Calu3 (cell line): ENCODE measurements at regions of chr3 and their contacts with region 1.

Region 1: DNA sequence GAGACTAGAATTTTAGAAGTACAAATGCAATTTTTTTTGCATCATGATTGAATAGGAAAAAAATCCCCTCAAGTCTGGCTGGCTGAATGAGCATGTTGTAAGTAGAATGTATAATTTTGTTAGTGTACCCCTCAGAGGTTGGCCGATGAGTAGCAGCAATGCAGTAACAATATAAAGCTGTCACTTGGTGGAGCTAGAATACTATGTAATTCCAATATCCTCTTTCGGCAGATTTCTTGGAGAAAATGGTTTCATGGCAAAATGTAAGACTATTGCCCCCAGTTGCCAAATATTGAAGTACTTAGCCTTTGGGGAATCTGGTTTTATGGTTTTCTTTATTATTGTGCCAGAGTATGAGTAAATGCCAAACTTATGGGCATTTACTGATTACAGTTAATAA is 39.8 kb upstream of the SGO1 start:
- DNase-seq: peak; percentile 7
- H3K4me3 Mint-ChIP-seq: no peak overlapping the region
- H3K27ac Mint-ChIP-seq: no peak overlapping the region
- H3K4me1 Mint-ChIP-seq: no peaks in the 10 kb centered on the region
- H3K27me3 Mint-ChIP-seq: no peaks in the 10 kb centered on the region
- CTCF ChIP-seq: no peak

Region 2: DNA sequence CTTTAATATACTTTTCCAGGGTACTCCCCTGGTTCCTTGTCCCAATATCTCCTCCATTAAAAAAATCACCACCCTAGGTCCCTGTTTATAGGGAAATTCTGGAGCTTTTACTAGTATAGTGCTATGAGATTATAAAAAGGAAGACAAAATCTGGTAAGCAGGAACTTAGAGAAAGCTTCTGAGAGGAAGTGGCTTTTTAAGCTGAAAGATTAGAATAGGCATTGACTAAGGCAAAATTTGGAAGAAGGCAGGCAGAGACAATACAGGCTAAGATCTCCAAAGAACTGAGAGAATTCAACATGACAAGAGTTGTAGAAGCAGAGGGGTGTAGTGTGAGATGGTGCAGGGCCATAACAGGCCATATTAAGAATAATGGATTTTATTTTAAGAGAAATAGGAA is 65.5 kb before region 1 on chr3:
- CTCF ChIA-PET with region 1: no interaction called
- intact Hi-C with region 1: no loop called
- DNase-seq: no peak
- H3K4me3 Mint-ChIP-seq: no peak overlapping the region
- H3K27ac Mint-ChIP-seq: no peak overlapping the region
- H3K4me1 Mint-ChIP-seq: no peaks in the 10 kb centered on the region
- H3K27me3 Mint-ChIP-seq: no peaks in the 10 kb centered on the region
- CTCF ChIP-seq: no peak

Region 3: GRCh38 chr3:20340324-20340928 is 114.7 kb after region 1 on chr3:
- CTCF ChIA-PET with region 1: no interaction called
- intact Hi-C with region 1: loop called (anchors 5 kb)
- DNase-seq: peak; percentile 75
- H3K4me3 Mint-ChIP-seq: no peak overlapping the region
- H3K27ac Mint-ChIP-seq: no peak overlapping the region
- H3K4me1 Mint-ChIP-seq: no peaks in the 10 kb centered on the region
- H3K27me3 Mint-ChIP-seq: no peaks in the 10 kb centered on the region
- CTCF ChIP-seq: peak; percentile 63

Region 4: DNA sequence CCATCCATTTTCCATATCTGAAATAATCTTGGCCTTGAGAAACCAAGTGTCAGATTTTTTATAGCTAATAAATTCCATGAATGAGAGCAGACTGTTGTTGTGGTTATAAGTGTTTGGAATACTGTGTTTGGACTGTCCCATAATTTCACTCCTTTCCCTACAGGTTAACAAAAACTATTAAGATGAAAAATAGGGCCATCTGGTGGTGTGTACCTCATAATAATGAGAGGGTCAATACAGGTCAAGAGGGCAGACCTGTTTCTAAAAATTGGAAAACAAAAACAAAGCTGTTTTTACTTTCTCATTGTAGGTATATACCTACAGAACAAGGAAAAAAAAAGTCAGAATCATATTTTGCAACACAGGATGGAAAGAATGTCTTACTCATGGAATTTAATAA is 514.0 kb after region 1 on chr3:
- CTCF ChIA-PET with region 1: no interaction called
- intact Hi-C with region 1: loop called (anchors 5 kb)
- DNase-seq: no peak
- H3K4me3 Mint-ChIP-seq: no peak overlapping the region
- H3K27ac Mint-ChIP-seq: no peak overlapping the region
- H3K4me1 Mint-ChIP-seq: no peaks in the 10 kb centered on the region
- H3K27me3 Mint-ChIP-seq: no peaks in the 10 kb centered on the region
- CTCF ChIP-seq: no peak

Region 5: GRCh38 chr3:21484057-21484827 is 1258.5 kb after region 1 on chr3:
- CTCF ChIA-PET with region 1: no interaction called
- intact Hi-C with region 1: loop called (anchors 5 kb)
- DNase-seq: peak; percentile 80
- H3K4me3 Mint-ChIP-seq: no peak overlapping the region
- H3K27ac Mint-ChIP-seq: no peak overlapping the region
- H3K4me1 Mint-ChIP-seq: no peaks in the 10 kb centered on the region
- H3K27me3 Mint-ChIP-seq: no peaks in the 10 kb centered on the region
- CTCF ChIP-seq: peak; percentile 70

Region 6: GRCh38 chr3:22117751-22118346 is 1892.1 kb after region 1 on chr3:
- CTCF ChIA-PET with region 1: no interaction called
- intact Hi-C with region 1: loop called (anchors 10 kb)
- DNase-seq: no peak
- H3K4me3 Mint-ChIP-seq: no peak overlapping the region
- H3K27ac Mint-ChIP-seq: no peak overlapping the region
- H3K4me1 Mint-ChIP-seq: peaks cover 9% of the 10 kb centered on the region
- H3K27me3 Mint-ChIP-seq: no peaks in the 10 kb centered on the region
- CTCF ChIP-seq: peak; percentile 27